AG04449 (cell line): ENCODE measurements at regions of chr1 and their contacts with region 1.

Region 1: GRCh38 chr1:246689409-246690008 is 34.7 kb upstream of the SCCPDH start:
- DNase-seq: no peak
- H3K4me3 ChIP-seq: peak overlapping the region; percentile 50
- CTCF ChIP-seq: peak; percentile 73

Region 2: DNA sequence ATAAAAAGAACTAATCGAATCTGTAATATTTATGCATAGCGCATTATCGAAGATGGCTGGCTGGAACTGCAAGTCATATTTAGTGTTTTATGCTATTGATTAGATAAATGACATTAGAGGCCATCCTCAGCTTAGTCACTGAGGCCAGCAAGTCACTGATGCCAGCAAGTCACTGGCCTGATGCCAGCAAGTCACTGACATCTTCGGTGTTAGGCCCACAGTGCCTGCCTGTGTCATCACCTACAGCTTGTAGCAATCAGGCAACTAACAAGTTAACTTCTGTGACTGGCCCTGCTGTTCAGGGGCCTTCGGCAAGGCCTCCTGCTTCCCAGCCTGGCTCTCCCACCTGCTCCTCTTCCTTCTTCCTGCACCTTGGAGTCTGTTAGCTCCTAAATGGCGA is 30.9 kb before region 1 on chr1:
- CTCF ChIA-PET with region 1: interaction called, 13 read pairs
- POLR2A ChIA-PET with region 1: no interaction called
- DNase-seq: no peak
- H3K4me3 ChIP-seq: no peak overlapping the region
- CTCF ChIP-seq: no peak

Region 3: GRCh38 chr1:246724016-246724730 is 34.7 kb after region 1 on chr1 and contains the start of gene SCCPDH:
- CTCF ChIA-PET with region 1: interaction called, 20 read pairs
- POLR2A ChIA-PET with region 1: no interaction called
- DNase-seq: no peak
- H3K4me3 ChIP-seq: peak within 1 kb of the TSS; percentile 78
- CTCF ChIP-seq: peak; percentile 1

Region 4: GRCh38 chr1:246748880-246749279 is 59.4 kb after region 1 on chr1:
- CTCF ChIA-PET with region 1: interaction called, 79 read pairs
- POLR2A ChIA-PET with region 1: no interaction called
- DNase-seq: no peak
- H3K4me3 ChIP-seq: no peak overlapping the region
- CTCF ChIP-seq: no peak

Region 5: DNA sequence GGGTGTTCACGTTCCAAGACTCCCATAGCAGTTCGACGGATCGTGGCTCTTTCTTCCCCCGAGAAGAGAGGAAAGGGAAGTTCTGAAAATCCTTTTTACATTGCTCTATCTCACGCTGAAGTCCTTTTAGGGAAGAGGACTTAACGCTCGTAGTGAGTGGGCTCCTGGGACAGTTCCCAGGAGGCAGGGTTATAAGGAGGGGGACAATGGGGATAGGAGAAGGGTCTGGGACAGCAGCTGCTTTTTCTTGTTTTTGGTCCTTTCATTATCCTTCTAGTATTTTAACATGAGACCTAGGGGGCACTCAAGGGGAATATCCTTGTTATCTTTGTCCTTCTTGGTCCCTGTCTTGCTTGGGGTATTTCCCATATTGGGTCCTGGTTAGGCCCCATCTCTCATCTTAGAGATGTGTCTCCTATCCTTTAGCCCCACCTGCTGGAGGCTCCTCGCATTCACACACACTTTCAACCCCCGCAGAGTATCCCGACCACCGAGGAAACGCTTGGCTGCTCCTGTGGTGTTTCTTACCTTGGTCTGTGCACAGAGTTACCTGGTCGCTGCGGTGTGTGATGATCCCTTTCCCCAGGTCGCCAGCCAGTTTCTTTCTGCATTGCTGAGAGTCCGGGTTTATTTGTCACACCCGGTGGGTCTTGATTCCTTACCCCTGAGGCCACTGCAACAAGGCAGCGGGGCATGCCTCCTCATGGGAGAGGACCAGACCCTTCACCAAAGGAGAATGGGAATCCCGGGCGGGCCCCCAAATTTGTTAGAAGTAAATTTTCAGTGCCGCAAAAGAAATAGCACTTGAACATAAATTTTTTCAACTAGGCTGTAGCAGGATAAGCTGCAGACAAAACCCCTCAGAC is 64.4 kb after region 1 on chr1:
- CTCF ChIA-PET with region 1: interaction called, 79 read pairs
- POLR2A ChIA-PET with region 1: no interaction called
- DNase-seq: no peak
- H3K4me3 ChIP-seq: no peak overlapping the region
- CTCF ChIP-seq: peak; percentile 80

Region 6: DNA sequence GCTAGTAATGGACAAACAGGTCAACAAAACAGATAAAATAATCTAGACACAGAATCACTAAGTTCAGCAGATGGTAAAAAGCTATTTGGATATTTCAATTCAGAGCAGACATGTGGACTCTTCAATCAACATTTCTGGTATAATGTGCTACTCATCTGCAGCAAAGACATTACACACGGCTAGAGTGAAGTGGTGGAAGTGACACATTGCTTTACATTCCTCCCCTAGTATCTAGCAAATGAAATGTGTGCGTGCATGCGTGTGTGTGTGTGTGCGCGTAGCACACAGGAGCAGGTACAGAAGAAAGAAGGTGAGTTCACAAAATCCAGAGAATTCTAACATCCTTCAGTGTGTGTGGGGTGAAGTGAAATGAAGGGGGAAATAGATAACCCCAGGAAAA is 234.0 kb after region 1 on chr1:
- CTCF ChIA-PET with region 1: no interaction called
- POLR2A ChIA-PET with region 1: no interaction called
- DNase-seq: no peak
- H3K4me3 ChIP-seq: no peak overlapping the region
- CTCF ChIP-seq: no peak